HCT116 (cell line): ENCODE measurements at regions of chr1 and their contacts with region 1.

Region 1: GRCh38 chr1:153946622-153947241 is at the start of gene DENND4B:
- DNase-seq: no peak
- ATAC-seq: peak; percentile 89
- H3K4me3 ChIP-seq: peak within 1 kb of the TSS; percentile 83 to 91
- H3K27ac ChIP-seq: peak within 1 kb of the TSS; percentile 98
- H3K4me1 ChIP-seq: peaks cover 6 to 18% of the 10 kb centered on the region in 2 experiments; a peak in 3 of 4 replicates
- H3K27me3 ChIP-seq: no peaks in the 10 kb centered on the region
- CTCF ChIP-seq: peak; percentile 69 to 95 (median 81)
- POLR2A ChIP-seq: no peak
- RAD21 ChIP-seq: peak; percentile 53
- total RNA-seq, gene DENND4B: 70.8 TPM

Region 2: DNA sequence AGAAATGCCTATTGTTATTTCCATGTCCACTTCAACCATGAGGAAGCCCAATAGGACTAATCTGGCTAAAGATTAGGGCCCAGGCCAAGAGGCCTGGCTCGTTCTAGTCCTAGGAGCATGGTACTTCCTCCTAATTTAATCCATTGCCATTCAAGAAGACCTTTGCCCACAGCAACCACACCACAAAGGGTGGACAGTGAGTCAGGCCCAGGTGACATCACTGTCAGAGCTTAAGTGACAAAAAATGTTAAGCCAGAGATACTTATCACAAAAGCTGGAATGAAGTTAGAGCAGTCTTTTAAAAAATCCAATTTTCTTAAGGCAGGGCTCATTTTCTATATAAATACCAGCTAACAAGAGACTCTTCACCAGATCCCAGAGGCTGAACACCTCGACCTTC is 945.4 kb before region 1 on chr1 and contains the start of gene SPRR3:
- CTCF ChIA-PET with region 1: no interaction called
- POLR2A ChIA-PET with region 1: no interaction called
- RAD21 ChIA-PET with region 1: no interaction called
- intact Hi-C with region 1: no loop called
- DNase-seq: no peak
- ATAC-seq: no peak
- H3K4me3 ChIP-seq: no peak within 1 kb of the TSS
- H3K27ac ChIP-seq: no peak within 1 kb of the TSS
- H3K4me1 ChIP-seq: peaks cover 0 to 10% of the 10 kb centered on the region in 2 experiments; a peak in 1 of 4 replicates
- H3K27me3 ChIP-seq: peaks cover 22% of the 10 kb centered on the region; the same call in 1 of the 2 replicates
- CTCF ChIP-seq: no peak
- POLR2A ChIP-seq: no peak
- RAD21 ChIP-seq: no peak
- total RNA-seq, gene SPRR3: not detected

Region 3: DNA sequence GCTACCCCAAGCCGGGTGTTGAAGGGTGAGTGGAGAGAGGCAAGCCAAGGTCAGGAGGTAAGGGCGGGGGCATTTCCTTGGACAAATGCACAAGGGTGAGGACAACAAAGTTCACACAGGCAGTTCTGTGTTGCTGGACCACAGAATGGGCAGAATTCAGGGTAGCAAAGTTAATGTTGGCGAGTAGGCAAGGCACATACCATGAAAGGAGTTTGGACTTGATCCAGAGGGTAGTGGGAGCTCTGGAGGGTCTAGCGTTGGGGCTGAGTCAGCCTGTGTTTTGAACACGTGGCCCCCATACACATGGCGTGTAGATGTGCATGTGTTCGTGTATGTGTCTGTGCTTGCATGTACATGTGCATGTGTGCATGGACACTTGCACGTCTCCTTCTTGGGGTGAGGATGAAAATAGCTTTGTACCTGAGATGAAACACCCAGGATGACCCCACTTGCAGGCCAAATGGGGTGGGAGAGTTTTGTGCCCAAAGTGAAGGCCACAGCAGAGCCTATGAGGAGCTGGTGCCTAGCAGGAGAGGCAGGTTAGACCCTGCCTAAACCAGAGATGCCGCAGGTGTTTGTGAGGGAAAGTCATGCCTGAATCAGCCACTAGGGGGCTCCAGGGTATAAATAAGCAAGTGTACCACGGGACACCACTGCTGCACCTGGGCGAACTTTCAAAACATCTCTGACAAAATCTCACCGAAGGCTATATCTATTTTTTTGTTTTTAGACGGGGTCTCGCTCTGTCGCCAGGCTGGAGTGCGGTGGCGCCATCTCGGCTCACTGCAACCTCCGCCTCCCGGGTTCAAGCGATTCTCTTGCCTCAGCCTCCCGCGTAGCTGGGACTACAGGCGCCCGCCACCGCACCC is 149.7 kb before region 1 on chr1:
- CTCF ChIA-PET with region 1: interaction called, 4 read pairs
- POLR2A ChIA-PET with region 1: no interaction called
- RAD21 ChIA-PET with region 1: interaction called in 1 of 2 experiments, 3 read pairs
- intact Hi-C with region 1: loop called (anchors 1 kb)
- DNase-seq: peak; percentile 42
- ATAC-seq: peak; percentile 93
- H3K4me3 ChIP-seq: no peak overlapping the region
- H3K27ac ChIP-seq: no peak overlapping the region
- H3K4me1 ChIP-seq: peaks cover 0 to 2% of the 10 kb centered on the region in 2 experiments; a peak in 1 of 4 replicates
- H3K27me3 ChIP-seq: no peaks in the 10 kb centered on the region
- CTCF ChIP-seq: peak; percentile 80 to 86 (median 82)
- POLR2A ChIP-seq: no peak
- RAD21 ChIP-seq: peak; percentile 93

Region 4: DNA sequence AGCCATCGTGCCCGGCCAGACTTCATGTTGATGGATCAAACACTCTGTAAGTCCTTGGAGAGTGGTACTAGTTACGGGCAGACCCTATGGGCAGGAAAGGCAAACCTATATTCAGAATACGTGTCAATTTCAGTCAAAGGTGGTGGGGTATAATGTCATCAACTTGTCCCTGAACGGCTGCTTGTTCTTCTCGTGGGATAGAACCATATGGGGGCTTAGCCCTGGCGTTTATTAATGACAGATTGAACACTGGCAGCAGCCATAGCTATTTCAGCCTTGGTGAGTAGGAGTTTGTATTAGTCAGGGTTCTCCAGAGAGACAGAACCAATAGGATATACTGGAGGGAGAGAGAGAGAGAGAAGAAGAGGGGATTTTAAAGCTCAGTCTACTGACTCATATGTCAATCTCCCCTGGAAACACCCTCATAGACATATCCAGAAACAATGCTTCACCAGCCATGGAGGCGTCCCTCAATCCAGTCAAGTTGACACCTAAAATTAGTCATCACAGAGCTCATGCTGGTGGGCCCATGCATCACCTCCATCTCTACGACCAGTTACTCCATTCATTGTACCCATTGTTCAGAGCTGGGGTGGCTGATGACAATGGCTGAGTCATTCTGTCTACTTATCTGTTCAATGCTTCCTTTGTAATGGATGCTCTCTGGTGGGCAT is 358.1 kb after region 1 on chr1:
- CTCF ChIA-PET with region 1: no interaction called
- POLR2A ChIA-PET with region 1: no interaction called
- RAD21 ChIA-PET with region 1: no interaction called
- intact Hi-C with region 1: no loop called
- DNase-seq: no peak
- ATAC-seq: no peak; the same call in 1 of the 2 replicates
- H3K4me3 ChIP-seq: no peak overlapping the region
- H3K27ac ChIP-seq: no peak overlapping the region
- H3K4me1 ChIP-seq: no peaks in the 10 kb centered on the region
- H3K27me3 ChIP-seq: no peaks in the 10 kb centered on the region
- CTCF ChIP-seq: no peak
- POLR2A ChIP-seq: no peak
- RAD21 ChIP-seq: no peak